Activated CD4-positive, alpha-beta memory T cell treated with anti-CD3 and anti-CD28 coated beads for 36 hours (primary cell): ENCODE measurements at regions of chr17 and their contacts with region 1.

Region 1: DNA sequence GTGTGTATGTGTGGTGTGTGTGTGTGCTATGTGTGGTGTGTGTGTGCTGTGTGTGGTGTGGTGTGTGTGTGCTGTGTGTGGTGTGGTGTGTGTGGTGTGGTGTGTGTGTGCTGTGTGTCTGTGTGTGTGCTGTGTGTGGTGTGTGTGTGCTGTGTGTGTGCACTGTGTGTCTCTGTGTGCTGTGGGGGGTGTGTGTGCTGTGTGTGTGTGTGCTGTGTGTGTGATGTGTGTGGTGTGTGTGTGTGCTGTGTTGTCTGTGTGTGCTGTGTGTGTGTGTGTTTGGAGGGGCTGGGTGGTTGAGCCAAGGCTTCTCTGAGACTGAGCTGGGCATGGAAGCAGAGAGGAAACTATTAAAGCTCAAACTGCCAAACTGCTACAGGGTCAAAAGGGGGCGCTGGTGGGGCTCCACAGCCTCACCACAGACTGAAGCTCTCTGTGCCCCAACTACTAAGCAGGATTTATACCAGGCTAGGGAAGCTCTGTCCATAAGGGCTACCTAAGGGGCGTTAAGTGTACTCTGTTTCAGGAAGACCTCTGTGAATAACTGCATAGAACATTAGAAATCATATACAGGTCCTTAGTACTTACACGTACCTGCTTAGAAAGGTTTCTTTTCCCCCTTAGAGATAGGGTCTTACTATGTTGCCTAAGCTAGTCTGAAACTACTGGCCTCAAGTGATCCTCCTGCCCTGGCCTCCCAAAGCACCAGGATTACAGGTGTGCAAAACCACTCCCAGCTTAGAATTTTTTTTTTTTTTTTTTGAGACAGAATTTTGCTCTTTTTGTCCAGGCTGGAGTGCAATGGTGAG is 27.8 kb upstream of the GHDC start:
- DNase-seq: peak; percentile 67
- H3K4me3 Mint-ChIP-seq: no peak overlapping the region
- H3K27ac Mint-ChIP-seq: peak overlapping the region; percentile 44
- H3K4me1 Mint-ChIP-seq: peaks cover 3% of the 10 kb centered on the region
- H3K27me3 Mint-ChIP-seq: no peaks in the 10 kb centered on the region

Region 2: GRCh38 chr17:42193969-42194899 is 27.9 kb before region 1 on chr17 and contains the start of gene GHDC:
- CTCF ChIA-PET with region 1: interaction called, 11 read pairs
- POLR2A ChIA-PET with region 1: no interaction called
- intact Hi-C with region 1: no loop called
- DNase-seq: peak; percentile 89
- H3K4me3 Mint-ChIP-seq: peak within 1 kb of the TSS; percentile 81
- H3K27ac Mint-ChIP-seq: peak within 1 kb of the TSS; percentile 68
- H3K4me1 Mint-ChIP-seq: peaks cover 18% of the 10 kb centered on the region
- H3K27me3 Mint-ChIP-seq: no peaks in the 10 kb centered on the region
- total RNA-seq, gene GHDC: 13.1 to 13.5 TPM

Region 3: GRCh38 chr17:42248351-42249179 is 26.4 kb after region 1 on chr17:
- CTCF ChIA-PET with region 1: interaction called, 25 read pairs
- POLR2A ChIA-PET with region 1: interaction called, 5 read pairs
- intact Hi-C with region 1: loop called (anchors 2 kb)
- DNase-seq: peak; percentile 88
- H3K4me3 Mint-ChIP-seq: peak overlapping the region; percentile 73
- H3K27ac Mint-ChIP-seq: peak overlapping the region; percentile 95
- H3K4me1 Mint-ChIP-seq: peaks cover 68% of the 10 kb centered on the region
- H3K27me3 Mint-ChIP-seq: no peaks in the 10 kb centered on the region

Region 4: GRCh38 chr17:42276359-42276608 is 54.1 kb after region 1 on chr17 and contains the start of gene STAT5B:
- CTCF ChIA-PET with region 1: interaction called, 36 read pairs
- POLR2A ChIA-PET with region 1: interaction called, 6 read pairs
- intact Hi-C with region 1: no loop called
- DNase-seq: peak; percentile 74
- H3K4me3 Mint-ChIP-seq: peak within 1 kb of the TSS; percentile 93
- H3K27ac Mint-ChIP-seq: peak within 1 kb of the TSS; percentile 97
- H3K4me1 Mint-ChIP-seq: peaks cover 34% of the 10 kb centered on the region
- H3K27me3 Mint-ChIP-seq: no peaks in the 10 kb centered on the region
- total RNA-seq, gene STAT5B: 192 to 195 TPM

Region 5: DNA sequence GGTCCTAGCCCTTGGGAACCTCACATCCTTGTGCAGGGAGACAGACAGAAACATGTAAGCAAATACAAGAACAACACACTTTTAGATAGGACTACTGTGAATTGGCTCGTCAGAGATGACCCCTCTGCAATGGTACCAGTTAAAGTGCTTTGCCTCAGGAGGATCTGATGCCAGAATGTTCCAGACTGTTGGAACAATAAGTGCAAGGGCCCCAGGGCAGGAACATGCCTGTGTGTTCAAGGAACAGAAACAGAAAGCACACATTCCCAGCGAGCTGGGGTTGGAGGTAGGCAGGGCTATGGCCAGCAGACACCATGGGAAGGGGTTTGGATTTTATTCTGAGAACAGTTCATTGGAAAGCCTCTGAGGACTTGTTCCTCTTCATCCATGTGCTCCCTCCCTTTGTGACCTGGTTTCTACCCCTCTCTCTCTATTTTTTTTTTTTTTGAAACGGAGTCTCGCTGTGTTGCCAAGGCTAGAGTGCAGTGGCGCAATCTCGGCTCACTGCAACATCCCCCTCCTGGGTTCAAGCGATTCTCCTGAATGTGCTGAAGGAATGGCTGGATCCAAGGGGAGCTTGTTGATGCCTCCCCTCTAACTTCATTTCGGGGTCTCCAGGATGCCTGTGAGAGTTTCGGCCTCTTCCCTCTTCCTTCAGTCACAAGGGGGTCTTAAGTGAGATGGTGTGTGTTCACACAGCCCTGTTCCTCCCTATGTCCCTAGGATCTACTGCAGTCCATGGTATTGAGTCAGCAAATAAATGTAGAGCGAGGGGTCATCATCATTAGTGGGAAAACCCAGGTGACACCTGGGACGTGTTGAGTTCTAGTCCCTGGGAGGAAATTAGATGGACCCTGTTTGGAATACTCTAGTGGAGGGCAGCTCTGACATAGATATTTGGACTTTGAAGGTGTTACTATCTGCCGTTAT is 72.6 kb after region 1 on chr17:
- CTCF ChIA-PET with region 1: interaction called, 87 read pairs
- POLR2A ChIA-PET with region 1: interaction called, 16 read pairs
- intact Hi-C with region 1: no loop called
- DNase-seq: no peak
- H3K4me3 Mint-ChIP-seq: no peak overlapping the region
- H3K27ac Mint-ChIP-seq: peak overlapping the region; percentile 70
- H3K4me1 Mint-ChIP-seq: peaks cover 45% of the 10 kb centered on the region
- H3K27me3 Mint-ChIP-seq: no peaks in the 10 kb centered on the region

Region 6: DNA sequence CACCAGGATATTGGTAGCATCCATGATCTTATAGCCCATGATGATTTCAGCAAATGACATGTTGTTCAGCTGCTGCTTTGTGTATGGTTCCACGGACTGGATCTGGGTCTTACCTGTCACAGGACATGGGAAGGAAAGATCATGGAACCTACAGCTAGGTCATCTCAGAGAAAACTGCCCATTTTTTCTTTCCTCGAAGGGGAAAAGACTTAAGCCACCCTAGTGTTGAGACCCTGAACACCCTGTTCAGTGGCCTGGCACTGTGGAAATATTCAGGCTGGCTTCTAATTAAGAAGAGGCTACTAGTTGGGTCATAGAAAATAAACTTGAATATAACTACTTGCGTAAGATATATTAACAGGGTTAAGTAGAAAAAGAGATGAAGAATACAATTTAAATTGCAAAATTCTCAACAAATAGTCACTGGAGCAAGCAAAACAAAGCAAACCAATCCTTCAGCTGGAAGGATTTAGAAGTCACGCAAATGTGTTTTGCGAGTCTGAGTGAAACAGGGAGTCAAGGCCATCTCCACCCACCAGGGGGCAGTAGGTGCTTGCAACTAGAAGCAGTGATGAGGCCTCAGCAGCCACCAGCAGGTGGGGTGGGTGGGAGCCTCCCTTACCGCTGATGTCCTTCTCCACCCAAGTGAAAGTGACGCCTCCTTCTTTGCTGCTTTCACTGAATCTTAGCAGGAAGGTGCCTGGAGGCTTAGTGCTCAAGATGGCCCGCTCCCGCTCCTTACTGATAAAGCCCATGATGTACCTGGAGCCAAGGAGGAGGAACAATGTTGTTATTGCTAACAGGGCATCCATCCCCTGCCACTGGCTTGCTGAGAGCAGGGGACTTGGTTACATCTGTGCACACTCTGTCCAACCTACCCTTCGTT is 100.5 kb after region 1 on chr17:
- CTCF ChIA-PET with region 1: interaction called, 9 read pairs
- POLR2A ChIA-PET with region 1: no interaction called
- intact Hi-C with region 1: loop called (anchors 1 kb)
- DNase-seq: peak; percentile 96
- H3K4me3 Mint-ChIP-seq: no peak overlapping the region
- H3K27ac Mint-ChIP-seq: peak overlapping the region; percentile 67
- H3K4me1 Mint-ChIP-seq: peaks cover 37% of the 10 kb centered on the region
- H3K27me3 Mint-ChIP-seq: no peaks in the 10 kb centered on the region